CD4-positive, alpha-beta T cell (primary cell): ENCODE measurements at regions of chr9 and their contacts with region 1.

Region 1: GRCh38 chr9:34899535-34900158 is 58.4 kb upstream of the PHF24 start:
- DNase-seq: peak; percentile 67 to 90 (median 76)
- ATAC-seq: peak; percentile 100
- H3K4me3 ChIP-seq: no peak overlapping the region
- H3K4me3 Mint-ChIP-seq: no peak overlapping the region
- H3K27ac ChIP-seq: no peak overlapping the region
- H3K27ac Mint-ChIP-seq: no peak overlapping the region
- H3K4me1 ChIP-seq: no peaks in the 10 kb centered on the region
- H3K4me1 Mint-ChIP-seq: no peaks in the 10 kb centered on the region
- H3K27me3 ChIP-seq: peaks cover 7 to 20% of the 10 kb centered on the region in 2 experiments
- H3K27me3 Mint-ChIP-seq: peaks cover 57% of the 10 kb centered on the region
- CTCF ChIP-seq: peak; percentile 88

Region 2: DNA sequence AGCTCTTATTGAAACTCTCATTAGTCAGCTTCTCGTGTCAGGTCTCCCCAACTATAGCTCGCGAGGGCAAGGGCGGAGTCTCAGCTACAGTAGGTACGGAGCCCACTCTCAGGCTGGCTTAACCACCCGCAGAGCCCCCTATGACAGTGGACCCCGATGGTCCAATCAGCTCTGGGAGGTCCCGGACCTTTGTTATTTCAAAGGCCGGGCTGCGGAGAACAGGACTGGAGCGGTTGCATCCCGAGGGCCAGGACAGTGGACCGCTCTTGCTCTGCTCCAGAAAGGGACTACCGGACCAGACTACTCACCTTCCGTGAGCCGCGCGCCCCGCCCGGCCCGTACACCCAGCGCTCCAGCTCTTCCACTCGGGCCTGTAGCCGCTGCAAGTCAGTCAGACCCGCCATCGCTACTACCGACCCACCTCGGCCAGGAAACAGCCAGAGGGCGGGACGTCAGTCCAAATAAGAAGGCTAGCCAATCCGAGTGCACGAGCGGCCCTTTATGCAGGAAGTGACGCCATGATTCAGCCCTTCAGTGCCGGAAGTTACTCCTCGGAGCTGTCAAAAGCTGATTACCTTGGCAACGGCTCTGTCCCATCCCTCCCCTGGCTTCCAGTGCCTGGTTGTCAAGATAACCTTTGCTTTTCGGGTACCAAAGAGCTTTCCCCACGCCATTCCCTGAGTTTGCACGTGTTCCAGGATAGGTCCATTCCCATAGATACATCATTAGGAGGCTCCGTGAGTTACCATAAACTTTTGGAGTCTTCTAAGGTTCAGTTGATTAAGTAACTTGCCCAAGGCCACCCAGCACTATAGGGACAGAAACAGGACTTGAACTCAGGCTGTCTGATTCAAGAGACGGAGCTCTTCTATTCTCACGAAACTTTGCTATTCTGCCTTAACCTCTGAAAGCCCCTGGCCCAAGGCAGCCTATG is 279.3 kb before region 1 on chr9 and contains the start of gene DCTN3:
- CTCF ChIA-PET with region 1: no interaction called
- POLR2A ChIA-PET with region 1: no interaction called
- intact Hi-C with region 1: no loop called
- DNase-seq: peak; percentile 78 to 97 (median 88)
- ATAC-seq: peak; percentile 97
- H3K4me3 ChIP-seq: peak within 1 kb of the TSS; percentile 86
- H3K4me3 Mint-ChIP-seq: peak within 1 kb of the TSS; percentile 96
- H3K27ac ChIP-seq: peak within 1 kb of the TSS; percentile 33
- H3K27ac Mint-ChIP-seq: peak within 1 kb of the TSS; percentile 61
- H3K4me1 ChIP-seq: peaks cover 36% of the 10 kb centered on the region
- H3K4me1 Mint-ChIP-seq: peaks cover 33% of the 10 kb centered on the region
- H3K27me3 ChIP-seq: peaks cover 36 to 37% of the 10 kb centered on the region in 2 experiments
- H3K27me3 Mint-ChIP-seq: peaks cover 49% of the 10 kb centered on the region
- CTCF ChIP-seq: no peak
- total RNA-seq, gene DCTN3: 81.5 to 84.4 TPM

Region 3: GRCh38 chr9:34989003-34989945 is 89.6 kb after region 1 on chr9 and contains the start of gene DNAJB5:
- CTCF ChIA-PET with region 1: interaction called, 16 read pairs
- POLR2A ChIA-PET with region 1: interaction called, 4 read pairs
- intact Hi-C with region 1: loop called (anchors 1 to 2 kb)
- DNase-seq: peak; percentile 93 to 99 (median 95)
- ATAC-seq: peak; percentile 90
- H3K4me3 ChIP-seq: peak within 1 kb of the TSS; percentile 78
- H3K4me3 Mint-ChIP-seq: peak within 1 kb of the TSS; percentile 94
- H3K27ac ChIP-seq: peak within 1 kb of the TSS; percentile 62 to 63
- H3K27ac Mint-ChIP-seq: peak within 1 kb of the TSS; percentile 84
- H3K4me1 ChIP-seq: peaks cover 51% of the 10 kb centered on the region
- H3K4me1 Mint-ChIP-seq: peaks cover 51% of the 10 kb centered on the region
- H3K27me3 ChIP-seq: no peaks in the 10 kb centered on the region
- H3K27me3 Mint-ChIP-seq: no peaks in the 10 kb centered on the region
- CTCF ChIP-seq: no peak
- total RNA-seq, gene DNAJB5: 2.7 to 2.8 TPM

Region 4: DNA sequence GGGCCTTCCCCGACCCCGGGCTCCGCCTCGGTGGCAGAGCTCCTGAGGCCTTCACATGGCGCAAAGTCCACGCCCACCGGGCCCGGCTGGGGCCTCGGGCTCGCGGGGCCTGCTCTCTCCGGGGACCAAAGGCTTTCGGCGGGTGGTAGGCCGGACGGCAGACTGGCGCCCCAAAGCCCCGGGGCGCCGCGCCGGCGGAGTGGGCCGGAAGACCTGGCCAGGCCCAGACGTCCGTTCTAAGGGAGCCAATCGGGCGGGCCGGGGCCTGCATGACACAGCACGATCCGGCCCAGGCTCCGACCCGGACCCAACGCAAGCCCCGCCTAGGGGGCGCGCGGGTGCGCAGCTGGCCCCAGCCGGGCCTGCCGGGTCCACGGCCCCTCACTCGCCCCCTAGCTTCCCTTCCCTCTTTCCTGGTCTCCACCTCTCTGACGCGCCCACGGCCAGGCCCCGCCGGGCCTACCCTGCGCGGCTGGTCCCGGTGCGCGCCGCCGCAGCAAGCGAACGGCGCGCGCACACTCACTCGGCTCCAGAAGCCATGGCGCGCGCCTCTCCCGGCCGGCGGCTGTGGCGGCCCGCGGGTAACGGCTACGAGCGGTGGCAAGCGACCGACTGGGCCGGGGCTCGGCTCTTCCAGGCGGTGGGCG is 172.3 kb after region 1 on chr9:
- CTCF ChIA-PET with region 1: interaction called, 12 read pairs
- POLR2A ChIA-PET with region 1: interaction called, 8 read pairs
- intact Hi-C with region 1: no loop called
- DNase-seq: peak; percentile 42 to 87 (median 59)
- ATAC-seq: peak; percentile 45
- H3K4me3 ChIP-seq: peak overlapping the region; percentile 69
- H3K4me3 Mint-ChIP-seq: peak overlapping the region; percentile 85
- H3K27ac ChIP-seq: peak overlapping the region; percentile 92 to 96
- H3K27ac Mint-ChIP-seq: peak overlapping the region; percentile 87
- H3K4me1 ChIP-seq: peaks cover 42% of the 10 kb centered on the region
- H3K4me1 Mint-ChIP-seq: peaks cover 56% of the 10 kb centered on the region
- H3K27me3 ChIP-seq: no peaks in the 10 kb centered on the region
- H3K27me3 Mint-ChIP-seq: no peaks in the 10 kb centered on the region
- CTCF ChIP-seq: peak; percentile 35

Region 5: GRCh38 chr9:35102926-35103659 is 203.4 kb after region 1 on chr9 and contains the start of gene STOML2:
- CTCF ChIA-PET with region 1: interaction called, 11 read pairs
- POLR2A ChIA-PET with region 1: no interaction called
- intact Hi-C with region 1: no loop called
- DNase-seq: peak; percentile 84 to 97 (median 90)
- ATAC-seq: peak; percentile 98
- H3K4me3 ChIP-seq: peak within 1 kb of the TSS; percentile 99
- H3K4me3 Mint-ChIP-seq: peak within 1 kb of the TSS; percentile 92
- H3K27ac ChIP-seq: peak within 1 kb of the TSS; percentile 77 to 94
- H3K27ac Mint-ChIP-seq: peak within 1 kb of the TSS; percentile 89
- H3K4me1 ChIP-seq: peaks cover 28% of the 10 kb centered on the region
- H3K4me1 Mint-ChIP-seq: peaks cover 36% of the 10 kb centered on the region
- H3K27me3 ChIP-seq: no peaks in the 10 kb centered on the region
- H3K27me3 Mint-ChIP-seq: no peaks in the 10 kb centered on the region
- CTCF ChIP-seq: no peak
- total RNA-seq, gene STOML2: 29.8 to 30.5 TPM

Region 6: DNA sequence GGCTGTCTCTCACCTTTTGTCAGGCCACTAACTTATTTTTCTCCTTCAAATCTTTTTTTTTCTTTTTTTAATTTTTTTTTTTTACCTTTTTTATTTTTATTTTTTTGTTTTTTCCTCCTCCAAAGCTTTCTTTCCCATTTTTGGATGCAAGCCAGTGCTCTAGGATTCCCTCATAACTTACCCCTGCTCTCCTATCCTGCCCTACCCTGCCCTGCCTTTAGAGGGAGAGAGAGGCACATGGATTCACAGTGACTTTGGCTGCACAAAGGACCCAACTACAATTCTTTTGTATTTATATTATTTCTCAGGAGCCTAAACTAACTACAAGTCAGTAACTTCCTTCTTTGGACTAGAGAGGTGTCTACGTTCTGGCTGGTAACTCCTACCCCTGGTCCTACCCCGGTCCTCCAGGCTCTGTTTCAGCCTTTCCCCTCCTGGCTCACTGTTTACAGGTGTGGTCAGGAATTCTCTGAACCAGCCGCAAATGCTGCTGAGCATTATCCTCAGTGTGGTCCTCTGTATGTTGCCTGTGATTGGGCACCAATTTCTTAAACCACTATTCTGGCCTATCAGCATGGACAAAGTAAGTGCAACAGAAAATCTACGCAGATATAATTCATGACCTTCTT is 581.8 kb after region 1 on chr9:
- CTCF ChIA-PET with region 1: interaction called, 4 read pairs
- POLR2A ChIA-PET with region 1: no interaction called
- intact Hi-C with region 1: loop called in 1 of 2 experiments (anchors 1 kb)
- DNase-seq: peak in 5 of 14 experiments; percentile 11 to 46 (median 25)
- ATAC-seq: peak; percentile 63
- H3K4me3 ChIP-seq: no peak overlapping the region
- H3K4me3 Mint-ChIP-seq: no peak overlapping the region
- H3K27ac ChIP-seq: no peak overlapping the region
- H3K27ac Mint-ChIP-seq: no peak overlapping the region
- H3K4me1 ChIP-seq: no peaks in the 10 kb centered on the region
- H3K4me1 Mint-ChIP-seq: no peaks in the 10 kb centered on the region
- H3K27me3 ChIP-seq: peaks cover 5 to 8% of the 10 kb centered on the region in 2 experiments
- H3K27me3 Mint-ChIP-seq: peaks cover 15% of the 10 kb centered on the region
- CTCF ChIP-seq: peak; percentile 31